AG04449 (cell line): ENCODE measurements at regions of chr4 and their contacts with region 1.

Region 1: DNA sequence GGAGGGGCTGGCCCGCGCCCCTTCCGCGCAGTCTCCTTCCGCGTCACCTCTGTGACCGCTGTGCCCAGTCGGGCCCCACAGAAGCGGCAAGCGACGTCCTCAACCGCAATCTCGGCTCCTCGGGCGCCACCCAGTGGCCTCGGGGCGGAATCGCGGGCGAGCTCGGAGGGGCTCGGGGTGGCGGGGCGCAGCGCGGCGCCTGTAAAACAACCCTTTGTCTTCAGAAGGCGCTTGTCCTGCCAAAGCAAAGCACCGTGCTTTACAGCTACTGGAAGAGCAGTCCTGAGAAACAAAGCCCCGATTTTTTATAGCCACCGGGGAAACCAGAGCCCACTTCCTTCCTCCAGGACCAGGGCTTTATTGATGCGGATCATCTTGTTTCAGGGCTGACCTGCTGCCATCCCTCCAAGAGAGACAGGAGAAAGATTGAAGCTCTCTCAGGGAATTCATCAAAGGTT is 37.3 kb upstream of the CDKN2AIP start:
- DNase-seq: no peak
- H3K4me3 ChIP-seq: peak overlapping the region; percentile 63
- CTCF ChIP-seq: peak; percentile 95

Region 2: DNA sequence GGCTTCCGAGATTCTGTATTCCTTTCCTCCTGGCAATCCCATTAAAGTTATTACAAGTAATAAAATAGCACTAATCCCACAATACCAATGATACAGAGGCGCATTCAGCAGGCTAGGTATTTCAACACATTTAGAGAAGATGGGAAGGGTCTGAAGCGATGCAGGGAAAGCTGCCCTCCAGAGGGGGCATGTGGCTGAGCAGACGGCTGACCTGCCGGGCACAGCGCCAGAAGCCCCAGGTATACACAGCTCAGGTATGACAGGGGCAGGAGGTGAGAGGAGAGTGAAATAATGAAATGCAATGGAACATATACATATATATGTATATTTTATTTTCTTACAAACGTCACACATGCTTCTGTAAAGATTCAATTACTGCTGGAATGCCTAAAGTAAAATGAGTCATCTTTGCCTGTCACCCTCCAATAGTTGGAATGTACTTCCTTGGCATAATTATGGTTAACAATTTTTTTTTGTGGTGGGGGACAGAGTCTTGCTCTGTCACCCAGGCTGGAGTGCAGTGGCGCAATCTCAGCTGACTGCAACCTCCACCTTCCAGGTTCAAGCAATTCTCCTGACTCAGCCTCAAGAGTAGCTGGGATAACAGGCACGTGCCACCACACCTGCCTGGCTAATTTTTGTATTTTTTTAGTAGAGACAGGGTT is 15.9 kb after region 1 on chr4:
- CTCF ChIA-PET with region 1: interaction called, 13 read pairs
- POLR2A ChIA-PET with region 1: no interaction called
- DNase-seq: peak; percentile 40
- H3K4me3 ChIP-seq: no peak overlapping the region
- CTCF ChIP-seq: no peak

Region 3: DNA sequence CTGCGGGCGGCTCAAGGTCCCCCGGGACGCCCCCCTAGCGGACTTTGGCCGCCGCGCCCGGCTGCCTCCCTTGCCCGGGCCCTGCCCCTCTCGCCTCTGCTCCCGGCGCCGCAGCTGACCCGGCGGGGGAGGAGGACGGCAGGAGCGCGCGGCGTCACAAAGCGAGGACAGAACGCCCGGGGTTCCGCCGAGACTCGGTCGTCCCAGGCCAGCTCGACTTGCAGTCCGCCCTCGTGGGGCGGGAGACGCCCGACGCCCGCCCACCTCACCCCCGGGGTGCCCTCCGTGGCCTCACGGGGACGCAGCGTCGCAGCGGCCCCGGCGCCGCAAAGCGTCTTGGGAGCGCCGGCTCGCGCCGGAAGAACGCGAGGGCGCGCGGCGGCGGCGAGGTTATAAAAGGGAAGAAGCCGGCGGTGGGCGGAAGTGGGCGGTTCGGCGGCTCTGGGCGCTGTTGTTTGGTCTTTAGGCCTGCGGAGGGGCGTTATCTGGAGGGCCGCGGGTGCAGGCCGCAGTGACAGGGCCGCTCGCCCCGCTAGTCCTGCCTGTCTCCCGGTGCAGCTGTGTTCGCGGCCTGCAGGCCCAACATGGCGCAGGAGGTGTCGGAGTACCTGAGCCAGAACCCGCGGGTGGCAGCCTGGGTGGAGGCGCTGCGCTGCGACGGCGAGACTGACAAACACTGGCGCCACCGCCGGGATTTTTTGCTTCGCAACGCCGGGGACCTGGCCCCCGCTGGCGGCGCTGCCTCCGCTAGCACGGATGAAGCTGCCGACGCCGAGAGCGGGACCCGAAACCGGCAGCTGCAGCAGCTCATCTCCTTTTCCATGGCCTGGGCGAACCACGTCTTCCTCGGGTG is 37.3 kb after region 1 on chr4 and contains the start of gene CDKN2AIP:
- CTCF ChIA-PET with region 1: interaction called, 11 read pairs
- POLR2A ChIA-PET with region 1: interaction called, 3 read pairs
- DNase-seq: no peak
- H3K4me3 ChIP-seq: peak within 1 kb of the TSS; percentile 87
- CTCF ChIP-seq: no peak